Right cardiac atrium (tissue), 5 donors: ENCODE measurements at regions of chr13 and their contacts with region 1.

Region 1: DNA sequence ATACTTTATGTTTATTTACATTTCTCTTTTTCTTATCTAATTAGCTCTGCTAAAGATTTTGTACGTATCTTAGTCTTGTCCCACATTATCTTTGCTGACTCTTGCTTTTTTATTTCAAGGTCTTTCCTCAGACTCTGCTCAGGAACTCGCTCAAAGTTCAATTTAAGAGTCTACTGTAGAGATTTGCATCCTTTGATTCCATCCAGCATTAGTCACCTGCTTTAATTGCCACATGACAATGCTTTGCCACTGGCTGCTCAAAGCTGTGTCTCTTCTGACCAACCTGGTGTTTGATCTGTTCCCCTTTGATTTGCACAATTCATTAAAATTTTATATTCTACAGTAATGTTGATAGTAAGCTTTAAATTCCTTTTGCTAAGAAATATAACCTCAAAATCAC is 157.9 kb upstream of the FREM2 start:
- DNase-seq: no peak
- ATAC-seq: no peak
- H3K4me3 ChIP-seq: no peak overlapping the region
- H3K27ac ChIP-seq: no peak overlapping the region
- H3K4me1 ChIP-seq: no peaks in the 10 kb centered on the region
- H3K27me3 ChIP-seq: no peaks in the 10 kb centered on the region

Region 2: DNA sequence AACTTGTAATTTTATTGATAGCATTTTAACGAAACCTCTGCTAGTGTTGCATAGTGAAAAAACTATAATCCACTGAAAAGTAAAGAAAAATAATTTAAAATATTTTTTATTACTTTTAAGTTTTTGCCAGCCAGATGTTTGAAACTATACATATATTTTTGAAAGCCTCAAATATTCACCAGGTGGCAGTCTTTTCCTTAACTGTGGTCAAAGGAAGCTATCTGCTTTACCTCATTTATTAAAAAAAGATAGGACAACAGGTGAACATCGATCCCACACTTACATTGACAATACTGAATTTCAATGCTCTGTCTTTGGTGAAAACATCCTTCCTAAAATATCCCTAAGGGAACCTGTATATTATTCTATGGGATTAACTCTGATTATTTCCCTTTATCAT is 759.9 kb before region 1 on chr13:
- intact Hi-C with region 1: loop called in 1 of 4 experiments (anchors 5 kb)
- DNase-seq: no peak
- ATAC-seq: no peak
- H3K4me3 ChIP-seq: no peak overlapping the region
- H3K27ac ChIP-seq: no peak overlapping the region
- H3K4me1 ChIP-seq: no peaks in the 10 kb centered on the region
- H3K27me3 ChIP-seq: no peaks in the 10 kb centered on the region